ENCODE measurements at regions of chr6 and their contacts with region 1.

Region 1: GRCh38 chr6:47309291-47310130 is at the start of gene TNFRSF21:
- H3K4me3 Mint-ChIP-seq: peak within 1 kb of the TSS; percentile 77
- H3K27ac Mint-ChIP-seq: peak within 1 kb of the TSS; percentile 51
- H3K4me1 Mint-ChIP-seq: peaks cover 21% of the 10 kb centered on the region
- H3K27me3 Mint-ChIP-seq: peaks cover 64% of the 10 kb centered on the region

Region 2: DNA sequence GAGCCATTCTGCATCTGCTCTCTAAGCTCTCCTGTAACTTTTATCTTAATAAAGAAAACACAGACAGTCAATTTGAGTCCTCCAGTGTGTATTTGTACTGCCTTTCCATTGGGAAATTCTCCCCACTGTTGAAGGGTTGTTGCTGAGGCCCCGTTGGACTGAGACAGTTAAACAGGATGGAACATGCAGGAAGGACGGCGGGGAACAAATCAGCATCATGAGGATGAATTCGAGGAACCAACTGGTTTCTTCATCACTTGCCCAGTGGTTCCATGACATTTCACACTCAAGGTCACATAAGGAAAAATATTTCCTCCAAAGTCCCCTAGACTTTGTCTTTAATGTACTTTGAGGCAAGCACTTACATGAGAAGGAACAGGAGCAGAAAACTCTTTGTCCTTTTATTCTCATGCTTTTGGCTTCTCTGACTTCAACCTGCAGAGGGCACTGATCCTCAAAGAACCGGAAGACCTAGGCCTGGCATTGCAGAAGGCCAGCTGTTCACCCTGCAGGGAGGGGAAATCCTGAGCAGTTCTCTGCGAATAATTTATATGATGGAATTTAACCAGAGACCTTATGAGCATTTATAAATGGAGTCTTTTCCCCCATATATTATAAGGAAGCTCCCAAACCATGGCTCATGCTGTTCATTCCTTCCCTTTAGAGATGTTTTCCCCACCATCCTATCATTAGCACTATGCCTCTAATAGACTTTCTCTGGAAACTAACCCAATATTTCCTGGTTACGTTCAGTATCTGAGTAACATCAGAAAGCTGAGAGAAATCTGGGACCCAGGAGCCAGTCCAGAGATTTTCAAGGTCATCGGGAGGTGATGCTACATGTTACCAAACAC is 212.2 kb before region 1 on chr6:
- intact Hi-C with region 1: loop called (anchors 1 kb)
- H3K4me3 Mint-ChIP-seq: no peak overlapping the region
- H3K27ac Mint-ChIP-seq: peak overlapping the region; percentile 18
- H3K4me1 Mint-ChIP-seq: peaks cover 10% of the 10 kb centered on the region
- H3K27me3 Mint-ChIP-seq: peaks cover 65% of the 10 kb centered on the region

Region 3: DNA sequence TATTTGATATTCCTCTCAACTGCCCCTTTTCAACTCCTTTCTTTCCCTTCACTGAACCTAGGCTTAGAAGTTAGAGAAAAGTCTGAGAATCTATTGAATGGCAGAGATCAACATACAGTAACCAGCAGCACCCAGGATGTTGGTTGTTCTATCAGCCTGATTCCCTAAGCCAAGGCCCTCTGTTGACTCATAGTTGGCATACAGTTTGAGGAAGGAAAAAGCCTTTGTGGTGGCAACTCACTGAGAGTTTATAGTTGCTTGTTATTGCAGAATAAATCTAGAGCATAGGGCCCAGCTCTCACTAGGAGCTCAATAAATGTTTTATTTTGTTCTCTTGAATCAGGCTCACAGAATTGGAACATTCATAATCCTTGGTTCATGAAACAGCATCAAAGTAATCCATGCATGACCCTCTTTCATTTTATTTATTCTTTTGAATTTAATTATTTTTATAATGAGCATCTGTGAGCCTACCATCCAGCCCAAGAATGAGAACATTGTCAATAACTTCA is 148.3 kb before region 1 on chr6:
- intact Hi-C with region 1: loop called (anchors 5 kb)
- H3K4me3 Mint-ChIP-seq: no peak overlapping the region
- H3K27ac Mint-ChIP-seq: peak overlapping the region; percentile 58
- H3K4me1 Mint-ChIP-seq: peaks cover 46% of the 10 kb centered on the region
- H3K27me3 Mint-ChIP-seq: peaks cover 5% of the 10 kb centered on the region

Region 4: DNA sequence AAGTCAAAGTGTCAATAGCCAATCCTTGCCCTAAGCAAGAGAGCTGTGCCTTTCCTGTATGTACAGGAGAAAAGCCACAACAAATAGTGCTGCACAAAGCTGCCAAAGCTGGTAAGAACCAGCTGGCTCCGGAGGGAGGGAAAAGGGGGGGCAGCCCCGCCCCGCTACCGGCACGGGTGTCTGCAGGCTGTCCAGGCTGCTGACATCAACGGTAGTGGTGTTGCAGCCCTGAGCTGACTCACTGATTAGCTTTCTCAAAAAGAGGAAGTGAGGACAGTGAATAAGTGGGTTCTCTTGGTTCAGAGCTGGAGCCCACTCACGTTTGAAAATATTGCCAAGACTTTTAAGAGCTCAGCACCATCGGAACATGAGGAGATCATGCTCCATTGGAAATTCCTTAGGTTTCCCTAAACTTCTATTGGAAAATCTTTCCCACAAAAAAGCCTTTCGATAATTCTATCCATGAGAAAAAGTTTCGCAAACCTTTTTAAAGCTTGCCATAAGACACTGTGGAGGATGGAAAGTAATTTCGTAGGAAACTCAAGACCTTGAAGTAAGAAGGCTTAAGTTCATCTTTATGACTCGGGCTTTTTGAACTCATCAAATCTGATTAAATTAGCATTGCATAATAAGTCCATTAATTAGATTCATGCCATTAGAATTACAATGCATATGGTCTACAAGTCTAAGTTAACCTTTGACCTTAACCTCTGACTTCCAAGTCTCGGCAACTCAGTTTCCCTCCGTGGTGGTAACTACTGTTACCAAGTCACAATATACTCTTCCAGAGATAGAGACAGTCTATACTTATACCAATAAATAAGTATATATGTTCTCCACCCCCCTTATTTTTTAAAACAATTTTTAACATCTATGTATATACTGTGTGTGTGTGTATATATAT is 66.8 kb before region 1 on chr6:
- intact Hi-C with region 1: loop called (anchors 5 kb)
- H3K4me3 Mint-ChIP-seq: no peak overlapping the region
- H3K27ac Mint-ChIP-seq: peak overlapping the region; percentile 63
- H3K4me1 Mint-ChIP-seq: peaks cover 55% of the 10 kb centered on the region
- H3K27me3 Mint-ChIP-seq: peaks cover 4% of the 10 kb centered on the region

Region 5: GRCh38 chr6:47376930-47377329 is 67.4 kb after region 1 on chr6:
- intact Hi-C with region 1: no loop called
- H3K4me3 Mint-ChIP-seq: no peak overlapping the region
- H3K27ac Mint-ChIP-seq: no peak overlapping the region
- H3K4me1 Mint-ChIP-seq: peaks cover 48% of the 10 kb centered on the region
- H3K27me3 Mint-ChIP-seq: peaks cover 49% of the 10 kb centered on the region

Region 6: DNA sequence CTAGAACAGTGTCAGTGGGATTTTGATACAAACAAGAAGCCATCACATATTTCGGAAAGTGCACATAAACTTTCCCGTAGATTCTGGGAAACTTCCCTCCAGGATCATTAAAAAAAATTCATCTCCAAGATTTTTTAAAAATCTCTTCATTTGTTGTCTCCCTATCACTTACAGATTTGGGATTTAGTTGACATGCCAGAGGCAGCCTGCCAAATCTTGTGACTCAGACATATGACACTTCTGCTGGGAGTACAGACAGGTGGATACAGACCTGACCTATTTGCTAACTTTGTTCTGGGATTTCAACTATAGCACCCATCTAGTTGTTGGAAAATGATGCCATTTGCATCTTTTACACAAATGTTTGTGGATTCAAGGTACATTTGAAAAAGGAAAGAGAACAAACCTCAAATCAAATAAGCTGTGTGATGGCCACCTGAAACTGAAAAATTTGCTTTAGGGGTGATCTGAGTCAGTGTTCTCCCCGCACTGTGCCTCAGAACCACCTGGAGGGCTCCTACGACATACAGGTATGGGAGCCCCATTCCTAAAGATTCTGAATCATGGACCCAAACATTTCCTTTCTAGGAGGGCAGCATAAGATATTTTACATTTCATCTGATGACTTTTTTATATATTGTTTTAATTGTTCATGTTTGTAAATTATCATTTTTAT is 146.2 kb after region 1 on chr6:
- intact Hi-C with region 1: no loop called
- H3K4me3 Mint-ChIP-seq: no peak overlapping the region
- H3K27ac Mint-ChIP-seq: no peak overlapping the region
- H3K4me1 Mint-ChIP-seq: peaks cover under 1% of the 10 kb centered on the region
- H3K27me3 Mint-ChIP-seq: peaks cover 46% of the 10 kb centered on the region

Region 7: DNA sequence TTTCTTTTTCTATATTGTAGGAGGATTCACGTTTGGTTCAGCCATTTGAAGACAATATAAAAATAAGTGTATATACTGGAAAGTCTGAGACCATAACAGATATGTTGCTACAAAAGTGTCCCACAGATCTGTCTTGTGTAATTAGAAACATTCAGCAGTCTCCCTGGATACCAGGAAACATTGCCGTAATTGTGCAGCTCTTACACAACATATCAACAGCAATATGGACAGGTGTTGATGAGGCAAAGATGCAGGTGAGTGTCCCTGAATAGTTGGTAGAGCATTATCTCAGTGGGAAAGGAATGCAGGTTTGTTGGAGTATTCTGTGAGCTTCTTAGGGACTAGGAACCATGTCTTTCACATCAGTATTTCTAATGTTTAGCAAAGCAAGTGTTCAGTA is 370.5 kb after region 1 on chr6:
- intact Hi-C with region 1: no loop called
- H3K4me3 Mint-ChIP-seq: no peak overlapping the region
- H3K27ac Mint-ChIP-seq: no peak overlapping the region
- H3K4me1 Mint-ChIP-seq: no peaks in the 10 kb centered on the region
- H3K27me3 Mint-ChIP-seq: no peaks in the 10 kb centered on the region

Region 8: DNA sequence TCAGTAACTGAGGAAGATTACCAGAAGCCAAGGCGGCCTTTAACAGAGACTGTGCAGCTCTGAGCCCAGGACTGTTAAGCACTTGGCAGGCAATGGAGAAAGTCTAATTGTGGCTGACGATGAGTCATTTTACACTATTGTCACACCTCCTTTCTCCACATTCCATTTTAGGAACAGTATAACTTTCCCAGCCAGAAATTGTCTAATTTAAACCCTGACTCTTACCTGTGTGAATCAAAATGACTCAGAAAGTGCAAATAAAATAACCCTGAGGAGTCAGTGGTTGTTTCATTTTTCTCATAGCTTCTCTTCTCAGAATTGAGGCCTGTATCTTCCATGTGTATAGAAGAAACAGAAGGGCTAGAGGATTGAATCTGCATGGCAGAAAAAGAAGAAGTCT is 432.3 kb after region 1 on chr6:
- intact Hi-C with region 1: no loop called
- H3K4me3 Mint-ChIP-seq: no peak overlapping the region
- H3K27ac Mint-ChIP-seq: no peak overlapping the region
- H3K4me1 Mint-ChIP-seq: no peaks in the 10 kb centered on the region
- H3K27me3 Mint-ChIP-seq: no peaks in the 10 kb centered on the region